ENCODE measurements at regions of chr4 and their contacts with region 1.

Region 1: GRCh38 chr4:56840559-56840958 is 19.1 kb upstream of the SPINK2 start:
- DNase-seq: no peak
- H3K4me3 ChIP-seq: no peak overlapping the region
- H3K27me3 ChIP-seq: no peaks in the 10 kb centered on the region
- CTCF ChIP-seq: no peak

Region 2: DNA sequence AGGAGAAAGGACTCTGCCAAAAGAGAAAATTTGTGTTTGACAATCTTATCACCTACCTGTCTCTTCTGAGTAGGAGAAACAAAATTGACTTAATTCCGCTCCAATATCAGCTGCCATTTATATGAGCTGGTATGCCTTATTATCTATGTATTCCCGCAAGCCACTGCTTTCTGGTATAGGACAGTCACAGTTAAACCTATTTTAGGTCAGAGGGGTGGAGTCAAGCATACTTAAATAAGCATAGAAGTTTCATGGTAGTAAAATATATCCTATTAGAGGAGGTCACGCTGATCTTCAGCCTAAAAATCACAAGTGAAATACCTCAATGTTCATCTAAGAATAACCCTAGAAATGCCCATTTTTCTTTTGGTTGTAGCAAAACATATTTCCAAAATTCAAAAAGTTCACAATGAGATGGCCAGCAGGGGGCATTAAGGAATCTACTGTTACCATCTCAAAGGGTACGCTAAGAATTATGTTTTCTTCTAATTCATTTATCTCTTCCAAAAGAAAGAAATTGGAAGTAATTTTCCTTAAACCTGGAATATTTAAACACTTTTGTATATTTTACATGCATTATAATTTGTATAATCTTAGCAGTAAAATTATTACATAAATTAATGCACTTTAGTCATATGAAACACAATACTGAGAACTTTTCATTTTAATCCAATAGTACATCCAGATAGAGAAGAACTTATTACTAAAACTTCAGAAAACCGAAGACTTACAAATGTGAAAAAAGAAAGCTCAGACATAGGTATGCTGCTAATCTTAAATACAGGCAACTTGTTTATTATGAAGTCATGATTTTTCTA is 415.7 kb before region 1 on chr4:
- CTCF ChIA-PET with region 1: interaction called, 18 read pairs
- POLR2A ChIA-PET with region 1: no interaction called
- DNase-seq: no peak
- H3K4me3 ChIP-seq: no peak overlapping the region
- H3K27me3 ChIP-seq: no peaks in the 10 kb centered on the region
- CTCF ChIP-seq: peak; percentile 66

Region 3: GRCh38 chr4:56575820-56576429 is 264.6 kb before region 1 on chr4:
- CTCF ChIA-PET with region 1: interaction called, 15 read pairs
- POLR2A ChIA-PET with region 1: no interaction called
- DNase-seq: peak; percentile 3
- H3K4me3 ChIP-seq: no peak overlapping the region
- H3K27me3 ChIP-seq: peaks cover 2% of the 10 kb centered on the region; the same call in 1 of the 2 replicates
- CTCF ChIP-seq: peak; percentile 60

Region 4: GRCh38 chr4:56871371-56871866 is 30.9 kb after region 1 on chr4:
- CTCF ChIA-PET with region 1: interaction called, 11 read pairs
- POLR2A ChIA-PET with region 1: no interaction called
- DNase-seq: no peak
- H3K4me3 ChIP-seq: no peak overlapping the region
- H3K27me3 ChIP-seq: no peaks in the 10 kb centered on the region
- CTCF ChIP-seq: no peak

Region 5: DNA sequence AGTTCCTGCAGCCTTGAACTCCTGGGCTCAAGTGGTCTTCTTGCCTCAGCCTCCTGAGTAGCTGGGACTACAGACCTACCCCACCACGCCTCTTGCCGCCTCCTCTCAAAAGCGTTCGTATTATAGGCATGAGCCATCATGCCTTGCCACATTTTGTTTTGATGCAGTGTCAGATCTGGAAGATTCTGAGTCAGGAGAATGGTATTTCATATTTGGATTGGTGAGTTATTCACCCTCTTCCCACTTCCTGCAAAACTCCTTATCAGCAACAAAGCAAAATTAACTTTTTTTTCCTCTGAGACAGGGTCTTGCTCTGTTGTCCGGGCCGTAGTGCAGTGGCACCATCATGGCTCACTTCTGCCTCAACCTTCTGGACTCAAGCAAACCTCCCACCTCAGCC is 96.7 kb after region 1 on chr4:
- CTCF ChIA-PET with region 1: no interaction called
- POLR2A ChIA-PET with region 1: no interaction called
- DNase-seq: peak; percentile 40
- H3K4me3 ChIP-seq: no peak overlapping the region
- H3K27me3 ChIP-seq: no peaks in the 10 kb centered on the region
- CTCF ChIP-seq: no peak